ENCODE measurements at regions of chr2 and their contacts with region 1.

Region 1: GRCh38 chr2:85595301-85596025 is at the start of gene RNF181:
- DNase-seq: peak; percentile 99
- H3K4me3 Mint-ChIP-seq: peak within 1 kb of the TSS; percentile 98
- H3K27ac Mint-ChIP-seq: peak within 1 kb of the TSS; percentile 98
- H3K4me1 Mint-ChIP-seq: peaks cover 19% of the 10 kb centered on the region
- H3K27me3 Mint-ChIP-seq: no peaks in the 10 kb centered on the region
- CTCF ChIP-seq: no peak
- total RNA-seq, gene RNF181: 125 and 215 TPM in 2 replicates

Region 2: DNA sequence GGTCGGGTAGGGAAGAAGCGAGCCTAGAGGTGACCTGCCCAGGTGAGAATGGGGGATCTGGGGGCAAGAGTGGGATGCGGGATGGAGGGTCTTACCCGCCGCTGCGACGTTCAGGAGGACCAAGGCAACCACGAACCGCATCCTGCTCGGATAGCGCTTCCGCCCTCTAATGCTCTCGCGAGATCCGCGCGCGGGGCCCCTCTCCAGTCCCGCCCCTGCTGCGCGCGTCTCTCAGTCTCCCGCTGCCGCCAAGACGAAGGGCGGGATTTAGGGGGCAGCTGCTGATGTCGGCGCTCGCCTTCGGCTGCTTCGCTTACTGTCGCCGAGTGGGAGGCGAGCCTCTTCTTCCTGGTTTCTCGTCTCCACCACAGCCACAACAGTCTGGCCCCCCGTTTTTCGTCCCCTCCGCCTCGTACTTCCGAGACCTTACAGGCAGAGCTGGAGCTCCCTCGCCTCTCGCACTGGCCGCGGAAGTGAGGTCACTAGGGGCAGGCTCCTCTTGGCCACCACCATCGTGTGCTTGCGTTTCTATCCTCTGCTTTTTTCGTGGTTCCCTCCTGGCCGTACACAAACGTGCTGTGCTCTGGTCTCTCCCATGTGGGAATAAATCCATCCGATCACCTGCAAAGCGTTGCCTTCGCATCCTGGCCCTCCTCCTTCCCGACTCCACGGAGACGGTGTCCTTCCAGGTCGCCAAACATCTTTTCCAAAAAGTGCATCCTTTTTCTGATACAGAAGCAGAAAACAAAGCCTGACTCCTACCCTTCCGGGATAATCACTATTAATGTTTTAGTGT is 267.4 kb before region 1 on chr2 and contains the start of gene TGOLN2:
- CTCF ChIA-PET with region 1: no interaction called
- POLR2A ChIA-PET with region 1: interaction called, 12 read pairs
- intact Hi-C with region 1: no loop called
- DNase-seq: peak; percentile 92
- H3K4me3 Mint-ChIP-seq: peak within 1 kb of the TSS; percentile 82
- H3K27ac Mint-ChIP-seq: peak within 1 kb of the TSS; percentile 94
- H3K4me1 Mint-ChIP-seq: peaks cover 16% of the 10 kb centered on the region
- H3K27me3 Mint-ChIP-seq: no peaks in the 10 kb centered on the region
- CTCF ChIP-seq: no peak
- total RNA-seq, gene TGOLN2: 62.9 and 65.5 TPM in 2 replicates

Region 3: GRCh38 chr2:85551698-85552678 is 43.5 kb before region 1 on chr2:
- CTCF ChIA-PET with region 1: no interaction called
- POLR2A ChIA-PET with region 1: interaction called, 12 read pairs
- intact Hi-C with region 1: no loop called
- DNase-seq: peak; percentile 88
- H3K4me3 Mint-ChIP-seq: no peak overlapping the region
- H3K27ac Mint-ChIP-seq: no peak overlapping the region
- H3K4me1 Mint-ChIP-seq: peaks cover 1% of the 10 kb centered on the region
- H3K27me3 Mint-ChIP-seq: no peaks in the 10 kb centered on the region
- CTCF ChIP-seq: peak; percentile 87

Region 4: DNA sequence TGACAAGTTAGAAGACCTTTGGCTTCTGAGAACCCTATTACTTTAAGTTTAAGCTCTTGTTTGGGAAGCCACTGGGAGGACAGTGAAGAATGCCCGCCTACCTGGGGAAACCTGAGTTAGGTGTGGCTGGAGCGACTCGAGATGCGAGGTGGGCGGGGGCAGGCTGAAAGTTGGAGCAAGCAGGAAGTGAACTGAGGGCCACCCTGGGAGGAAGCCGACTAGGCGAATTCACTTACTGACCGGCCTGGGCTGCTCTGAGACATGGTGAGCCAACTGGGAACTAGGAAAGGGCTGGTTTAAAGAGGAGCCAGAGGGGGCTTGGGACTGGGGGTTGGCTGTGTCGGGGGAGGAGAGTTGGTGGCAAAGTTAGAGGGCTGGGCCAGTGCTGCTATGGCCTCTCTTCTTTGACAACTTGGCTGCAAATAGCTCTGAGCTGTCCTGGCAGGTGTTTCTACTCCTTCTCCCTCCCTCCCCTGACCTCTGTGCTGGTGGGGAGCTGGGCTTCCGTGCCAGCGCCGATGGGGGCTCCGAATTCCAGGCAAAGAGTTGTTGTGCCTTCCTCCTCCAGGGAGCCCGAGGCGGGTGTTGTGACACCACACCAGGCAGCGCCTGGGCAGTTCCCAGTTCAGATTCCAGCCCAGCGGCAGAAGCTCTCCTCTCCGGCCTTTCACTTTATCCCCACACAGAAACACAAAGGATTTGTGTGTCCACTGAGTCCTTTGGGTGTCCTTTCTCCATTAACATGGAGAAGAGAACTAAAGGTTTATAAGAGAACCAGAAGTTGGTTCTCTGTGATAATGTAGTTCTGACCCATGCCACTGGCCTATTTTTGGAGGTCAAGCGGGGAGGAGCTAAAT is 17.8 kb before region 1 on chr2 and contains the start of gene VAMP8:
- CTCF ChIA-PET with region 1: interaction called, 5 read pairs
- POLR2A ChIA-PET with region 1: interaction called, 113 read pairs
- intact Hi-C with region 1: no loop called
- DNase-seq: peak; percentile 80
- H3K4me3 Mint-ChIP-seq: peak within 1 kb of the TSS; percentile 79
- H3K27ac Mint-ChIP-seq: peak within 1 kb of the TSS; percentile 94
- H3K4me1 Mint-ChIP-seq: peaks cover 11% of the 10 kb centered on the region
- H3K27me3 Mint-ChIP-seq: no peaks in the 10 kb centered on the region
- CTCF ChIP-seq: no peak
- total RNA-seq, gene VAMP8: 49.9 and 56.0 TPM in 2 replicates

Region 5: GRCh38 chr2:85611705-85612587 is 16.5 kb after region 1 on chr2 and contains the start of gene C2orf68:
- CTCF ChIA-PET with region 1: no interaction called
- POLR2A ChIA-PET with region 1: interaction called, 61 read pairs
- intact Hi-C with region 1: no loop called
- DNase-seq: peak; percentile 83
- H3K4me3 Mint-ChIP-seq: peak within 1 kb of the TSS; percentile 83
- H3K27ac Mint-ChIP-seq: peak within 1 kb of the TSS; percentile 68
- H3K4me1 Mint-ChIP-seq: peaks cover 4% of the 10 kb centered on the region
- H3K27me3 Mint-ChIP-seq: no peaks in the 10 kb centered on the region
- CTCF ChIP-seq: no peak
- total RNA-seq, gene C2orf68: 34.3 and 35.5 TPM in 2 replicates